ENCODE measurements at regions of chr2 and their contacts with region 1.

Region 1: DNA sequence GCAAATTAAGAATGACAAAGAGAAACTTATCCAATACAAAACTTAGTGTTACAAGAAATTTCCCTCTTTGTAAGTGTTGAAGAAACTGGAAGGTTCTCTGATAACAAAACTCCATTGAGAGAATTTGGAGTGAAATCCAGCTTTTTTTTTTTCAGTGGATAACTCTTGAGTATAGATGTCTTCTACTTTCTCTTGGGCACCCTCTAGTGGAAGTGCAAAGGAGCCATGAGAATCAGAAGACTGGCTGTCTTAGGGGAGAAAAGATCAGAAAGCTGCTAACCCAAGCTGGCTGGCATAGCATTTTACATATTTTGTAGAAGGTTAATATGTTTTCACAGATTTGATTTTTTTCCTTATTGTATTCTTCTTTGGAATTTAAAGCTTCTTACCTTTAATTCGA is 138.8 kb upstream of the SATB2 start:
- DNase-seq: peak in 3 of 4 experiments; percentile 8 to 41 (median 13)
- ATAC-seq: peak; percentile 72; the same call in 2 of the 3 replicates
- H3K4me3 ChIP-seq: no peak overlapping the region
- H3K27ac ChIP-seq: no peak overlapping the region
- H3K4me1 ChIP-seq: no peaks in the 10 kb centered on the region; a peak in 1 of 5 replicates
- H3K27me3 ChIP-seq: no peaks in the 10 kb centered on the region
- CTCF ChIP-seq: peak; percentile 31 to 52 (median 48); a peak in 5 of 6 replicates
- EP300 ChIP-seq: no peak
- POLR2A ChIP-seq: no peak
- RAD21 ChIP-seq: peak in 1 of 2 experiments; percentile 36; a peak in 2 of 4 replicates

Region 2: DNA sequence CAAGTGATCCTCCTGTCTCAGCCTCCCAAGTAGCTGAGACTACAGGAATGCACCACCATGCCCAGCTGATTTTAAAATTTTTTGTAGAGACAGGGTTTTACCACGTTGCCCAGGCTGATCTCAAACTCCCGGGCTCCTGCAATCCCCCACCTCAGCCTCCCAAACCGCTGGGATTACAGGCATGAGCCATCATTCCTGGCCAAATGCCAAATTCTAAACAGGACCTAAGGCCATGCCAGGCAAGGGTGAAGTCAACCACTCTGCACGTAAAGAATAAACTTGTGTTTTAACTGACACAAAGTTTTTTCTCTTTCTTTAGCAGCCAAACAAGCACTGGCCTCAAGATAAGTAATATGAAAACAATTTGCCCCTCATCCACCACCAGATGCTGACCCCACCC is 101.4 kb before region 1 on chr2:
- CTCF ChIA-PET with region 1: no interaction called
- POLR2A ChIA-PET with region 1: no interaction called
- in situ Hi-C with region 1: no loop called
- intact Hi-C with region 1: loop called (anchors 5 kb)
- DNase-seq: no peak
- ATAC-seq: no peak
- H3K4me3 ChIP-seq: no peak overlapping the region
- H3K27ac ChIP-seq: no peak overlapping the region
- H3K4me1 ChIP-seq: no peaks in the 10 kb centered on the region
- H3K27me3 ChIP-seq: peaks cover 0 to 12% of the 10 kb centered on the region in 2 experiments; a peak in 4 of 5 replicates
- CTCF ChIP-seq: no peak
- EP300 ChIP-seq: no peak
- POLR2A ChIP-seq: no peak
- RAD21 ChIP-seq: no peak

Region 3: GRCh38 chr2:199883474-199884212 is 287.1 kb after region 1 on chr2:
- CTCF ChIA-PET with region 1: no interaction called
- POLR2A ChIA-PET with region 1: no interaction called
- in situ Hi-C with region 1: no loop called
- intact Hi-C with region 1: no loop called
- DNase-seq: no peak
- ATAC-seq: no peak
- H3K4me3 ChIP-seq: no peak overlapping the region
- H3K27ac ChIP-seq: no peak overlapping the region
- H3K4me1 ChIP-seq: no peaks in the 10 kb centered on the region
- H3K27me3 ChIP-seq: no peaks in the 10 kb centered on the region
- CTCF ChIP-seq: no peak
- EP300 ChIP-seq: no peak
- POLR2A ChIP-seq: no peak
- RAD21 ChIP-seq: no peak